ENCODE measurements at regions of chr15 and their contacts with region 1.

Region 1: DNA sequence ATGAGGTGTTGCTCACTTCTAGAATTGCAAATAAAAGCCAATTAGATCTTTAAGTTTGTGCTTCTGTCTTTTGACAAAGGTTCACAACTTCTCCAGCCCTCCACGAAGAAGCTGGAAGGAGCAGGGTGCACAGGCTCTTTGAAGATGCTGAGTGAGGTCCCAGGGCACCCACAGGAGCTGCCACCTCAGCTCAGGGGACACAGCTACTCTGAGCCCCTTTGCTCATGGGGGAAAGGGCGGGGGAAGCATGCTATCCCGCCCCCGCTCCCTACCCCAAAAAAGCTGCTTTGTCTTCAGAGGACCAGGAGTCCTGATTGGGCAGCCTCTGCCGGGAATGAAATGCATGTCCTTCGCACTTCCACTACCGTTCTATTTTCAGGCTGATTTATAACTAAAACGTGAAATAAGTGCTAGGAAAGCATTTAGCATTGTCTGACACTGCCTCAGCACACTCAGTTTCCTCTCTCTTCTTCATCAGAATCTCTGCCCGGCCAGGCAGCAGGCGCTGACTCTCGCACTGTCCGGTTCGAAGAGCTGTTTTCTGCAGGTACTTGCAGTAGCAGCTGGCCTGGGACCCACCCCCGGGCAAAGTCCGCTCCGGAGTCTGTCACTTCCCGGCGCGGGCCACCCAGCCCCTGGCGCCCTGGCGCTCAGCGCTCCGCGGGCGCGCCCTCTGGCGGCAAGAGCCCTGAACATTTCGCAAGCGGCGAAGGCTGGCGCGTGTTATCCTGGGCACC is 45.5 kb upstream of the KLHL25 start:
- DNase-seq: peak; percentile 82
- H3K4me3 Mint-ChIP-seq: peak overlapping the region; percentile 45
- H3K27ac Mint-ChIP-seq: no peak overlapping the region
- H3K4me1 Mint-ChIP-seq: peaks cover 4% of the 10 kb centered on the region
- H3K27me3 Mint-ChIP-seq: peaks cover 32% of the 10 kb centered on the region

Region 2: GRCh38 chr15:85296615-85297402 is 543.4 kb before region 1 on chr15:
- CTCF ChIA-PET with region 1: interaction called, 15 read pairs
- DNase-seq: peak; percentile 78
- H3K4me3 Mint-ChIP-seq: no peak overlapping the region
- H3K27ac Mint-ChIP-seq: no peak overlapping the region
- H3K4me1 Mint-ChIP-seq: peaks cover 15% of the 10 kb centered on the region
- H3K27me3 Mint-ChIP-seq: peaks cover 7% of the 10 kb centered on the region

Measured in activated naive CD4-positive, alpha-beta T cell treated with anti-CD3 and anti-CD28 coated beads, Interleukin-2, amount 10 ng/mL, durations not matched to agents 7 days and 5 days (primary cell).